Ascending aorta (tissue), 2 donors: ENCODE measurements at regions of chr2 and their contacts with region 1.

Region 1: DNA sequence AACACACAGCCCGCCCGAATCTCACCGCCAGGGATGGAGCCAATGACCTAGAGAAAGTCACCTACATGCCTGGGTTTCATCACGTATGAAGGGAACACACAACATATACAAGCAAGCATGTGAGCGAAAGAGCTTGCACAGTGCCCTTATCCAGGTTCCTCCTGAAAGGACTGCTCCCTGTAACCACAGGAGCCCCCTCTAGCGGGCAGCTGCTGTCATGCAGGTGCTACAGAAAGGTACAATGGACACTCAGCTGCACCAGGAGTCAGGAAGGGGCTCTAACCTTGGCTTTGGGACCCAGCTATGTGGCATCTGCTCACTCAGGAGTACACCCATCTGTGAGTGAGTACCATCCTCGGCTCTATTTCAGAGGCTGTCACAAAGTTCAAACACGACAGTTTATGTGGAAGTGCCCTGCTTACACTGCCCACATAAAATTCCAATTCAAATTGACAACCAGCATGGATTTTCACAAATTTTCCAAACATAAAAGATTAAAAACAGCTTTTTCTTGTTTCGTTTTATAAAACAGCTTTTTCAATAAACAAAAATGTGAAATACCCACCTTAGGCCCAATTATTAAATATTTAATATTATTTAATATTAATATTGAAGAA is 3.5 kb downstream of the NDUFA10 start:
- DNase-seq: no peak
- H3K4me3 ChIP-seq: no peak overlapping the region
- H3K27ac ChIP-seq: no peak overlapping the region
- H3K4me1 ChIP-seq: peaks cover 0 to 10% of the 10 kb centered on the region in 2 donors
- H3K27me3 ChIP-seq: no peaks in the 10 kb centered on the region
- CTCF ChIP-seq: peak; percentile 29 to 67 (median 57)

Region 2: DNA sequence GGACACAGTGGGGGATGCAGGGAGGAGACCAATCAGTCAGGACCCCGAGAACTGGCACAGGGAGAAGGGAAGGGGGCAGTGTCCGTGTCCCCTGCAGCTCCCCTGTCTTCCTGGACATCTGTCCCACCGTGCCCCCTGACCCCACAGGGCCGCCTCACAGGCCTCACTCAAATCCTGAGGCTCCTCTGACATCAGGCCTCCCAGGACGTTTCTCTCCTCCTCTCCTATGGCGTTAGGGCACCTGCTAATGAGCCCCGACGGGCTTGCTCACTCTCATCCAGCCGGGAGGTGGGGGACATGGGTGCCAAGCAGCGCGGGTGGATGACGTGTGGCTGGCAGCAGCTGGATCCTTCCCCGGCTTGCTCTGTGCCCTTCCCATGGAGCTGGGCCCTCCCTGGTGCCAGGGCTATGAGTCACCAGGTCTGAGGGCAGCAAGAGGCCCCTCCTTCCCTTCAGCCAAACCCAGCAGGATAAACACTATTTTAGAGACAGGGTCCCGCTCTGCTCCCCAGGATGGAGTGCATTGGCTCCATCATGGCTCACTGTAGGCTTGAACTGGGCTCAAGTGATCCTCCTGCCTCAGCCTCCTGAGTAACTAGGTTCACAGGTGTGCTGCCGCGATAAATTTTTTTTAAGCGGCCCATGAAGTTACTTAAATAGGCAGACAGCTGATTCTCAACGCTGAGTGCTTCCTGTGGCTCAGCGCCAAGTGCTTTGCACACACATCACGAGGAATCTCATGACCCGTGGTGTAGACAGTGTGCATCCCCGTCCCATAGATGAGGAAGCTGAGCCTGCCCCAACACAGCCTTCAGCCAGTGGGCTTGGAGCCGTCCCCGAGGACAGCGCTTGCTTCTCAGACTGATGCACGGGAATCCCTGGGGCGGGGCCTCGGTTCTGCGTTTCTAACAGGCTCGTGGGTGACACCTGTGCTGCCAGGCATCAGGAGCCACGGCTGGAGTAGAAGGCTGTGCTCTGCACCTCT is 556.3 kb before region 1 on chr2:
- intact Hi-C with region 1: loop called (anchors 10 kb)
- DNase-seq: peak; percentile 81 to 92
- H3K4me3 ChIP-seq: peak overlapping the region in 1 of 2 donors; percentile 22
- H3K27ac ChIP-seq: peak overlapping the region; percentile 36 to 52
- H3K4me1 ChIP-seq: no peaks in the 10 kb centered on the region
- H3K27me3 ChIP-seq: no peaks in the 10 kb centered on the region
- CTCF ChIP-seq: no peak

Region 3: GRCh38 chr2:240520130-240520973 is 498.8 kb after region 1 on chr2:
- intact Hi-C with region 1: no loop called
- DNase-seq: peak in 1 of 2 donors; percentile 57
- H3K4me3 ChIP-seq: peak overlapping the region in 1 of 2 donors; percentile 39
- H3K27ac ChIP-seq: no peak overlapping the region
- H3K4me1 ChIP-seq: peaks cover 0 to 3% of the 10 kb centered on the region in 2 donors
- H3K27me3 ChIP-seq: no peaks in the 10 kb centered on the region
- CTCF ChIP-seq: no peak

Region 4: DNA sequence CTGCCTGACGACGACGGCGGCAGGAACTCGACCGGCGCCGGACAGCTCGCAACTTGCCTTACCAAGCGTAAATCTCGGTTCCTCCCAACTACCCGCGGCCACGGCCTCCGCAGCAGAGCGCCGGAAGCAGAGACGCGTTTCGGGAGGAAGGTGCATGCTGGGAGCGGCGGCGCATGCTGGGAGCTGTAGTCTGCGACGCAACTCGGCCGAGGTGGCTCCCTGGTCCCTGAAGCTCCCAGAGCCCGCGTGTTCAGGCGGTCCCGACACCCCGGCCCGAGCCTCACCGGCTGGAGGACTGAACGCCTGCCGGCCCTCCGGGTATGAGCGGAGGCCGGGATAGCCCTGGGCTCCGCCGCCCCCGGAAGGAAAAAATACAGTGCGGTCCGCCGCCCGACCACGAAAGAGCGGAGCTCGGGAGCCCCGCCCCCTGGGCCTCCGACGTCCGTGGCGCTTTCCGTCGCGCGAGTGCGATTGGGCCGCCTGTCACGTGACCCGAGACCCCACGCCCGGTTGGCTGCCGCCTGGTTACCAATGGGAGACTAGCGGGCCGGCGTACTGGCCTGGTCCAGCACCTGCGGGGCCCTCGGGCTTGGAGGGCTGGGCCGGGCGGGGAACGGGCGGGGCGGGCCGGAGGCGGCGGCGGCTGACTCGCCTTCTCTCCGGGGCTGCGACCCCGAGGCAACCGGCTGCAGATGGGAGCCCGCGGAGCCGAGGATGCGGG is 564.8 kb after region 1 on chr2 and contains the start of gene CAPN10:
- intact Hi-C with region 1: loop called (anchors 1 kb)
- DNase-seq: peak; percentile 87 to 98
- H3K4me3 ChIP-seq: peak within 1 kb of the TSS; percentile 97 to 99
- H3K27ac ChIP-seq: peak within 1 kb of the TSS; percentile 94 to 96
- H3K4me1 ChIP-seq: peaks cover 20 to 28% of the 10 kb centered on the region in 2 donors
- H3K27me3 ChIP-seq: no peaks in the 10 kb centered on the region
- CTCF ChIP-seq: no peak
- total RNA-seq, gene CAPN10: 27.8 TPM

Region 5: GRCh38 chr2:241844066-241844728 is 1822.6 kb after region 1 on chr2:
- intact Hi-C with region 1: no loop called
- DNase-seq: peak; percentile 35 to 88
- H3K4me3 ChIP-seq: peak overlapping the region; percentile 54 to 63
- H3K27ac ChIP-seq: peak overlapping the region; percentile 46 to 60
- H3K4me1 ChIP-seq: peaks cover 8% of the 10 kb centered on the region in 2 donors
- H3K27me3 ChIP-seq: no peaks in the 10 kb centered on the region
- CTCF ChIP-seq: no peak